ENCODE measurements at regions of chr6 and their contacts with region 1.

Region 1: GRCh38 chr6:144265390-144265789 is 19.7 kb upstream of the UTRN start:
- DNase-seq: no peak
- ATAC-seq: peak in 3 of 4 donors; percentile 17 to 59 (median 47)
- H3K4me3 ChIP-seq: peak overlapping the region in 1 of 12 donors; percentile 13
- H3K27ac ChIP-seq: peak overlapping the region; percentile 45 to 83 (median 68)
- H3K4me1 ChIP-seq: peaks cover 9 to 32% (median 26%) of the 10 kb centered on the region in 12 donors
- H3K27me3 ChIP-seq: no peaks in the 10 kb centered on the region
- CTCF ChIP-seq: no peak
- POLR2A ChIP-seq: no peak

Region 2: GRCh38 chr6:144149891-144150709 is 115.3 kb before region 1 on chr6 and contains the start of gene STX11:
- intact Hi-C with region 1: loop called in 1 of 10 experiments (anchors 1 kb)
- DNase-seq: peak; percentile 82 to 90 (median 85)
- ATAC-seq: peak; percentile 80 to 97 (median 94)
- H3K4me3 ChIP-seq: peak within 1 kb of the TSS; percentile 64 to 95 (median 78)
- H3K27ac ChIP-seq: peak within 1 kb of the TSS; percentile 10 to 97 (median 77)
- H3K4me1 ChIP-seq: peaks cover 0 to 51% (median 10%) of the 10 kb centered on the region in 12 donors
- H3K27me3 ChIP-seq: no peaks in the 10 kb centered on the region
- CTCF ChIP-seq: peak in 2 of 12 donors; percentile 21 to 46
- POLR2A ChIP-seq: peak in 1 of 2 donors; percentile 84
- total RNA-seq, gene STX11: 5.4 to 21.0 (median 9.0) TPM

Region 3: DNA sequence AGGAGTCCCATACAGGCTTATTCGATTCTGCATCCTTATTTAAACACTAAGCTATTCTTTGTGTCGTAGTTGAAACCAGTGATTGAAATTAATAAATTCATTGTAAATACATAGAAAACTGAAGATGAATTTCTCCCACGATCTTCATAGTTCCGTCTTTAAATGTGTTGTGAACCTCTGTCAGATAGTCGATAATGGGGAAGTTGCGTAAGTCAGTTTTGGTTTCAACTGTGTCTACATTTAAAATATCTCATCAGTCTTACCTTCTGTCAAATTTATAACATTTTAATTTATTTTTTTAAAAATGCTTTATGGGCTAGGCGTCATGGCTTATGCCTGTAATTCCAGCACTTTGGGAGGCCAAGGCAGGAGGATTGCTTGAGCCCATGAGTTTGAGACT is 102.4 kb before region 1 on chr6:
- intact Hi-C with region 1: no loop called
- DNase-seq: no peak
- ATAC-seq: no peak
- H3K4me3 ChIP-seq: peak overlapping the region in 1 of 12 donors; percentile 7
- H3K27ac ChIP-seq: peak overlapping the region in 1 of 12 donors; percentile 61
- H3K4me1 ChIP-seq: peaks cover 1 to 73% (median 14%) of the 10 kb centered on the region in 12 donors
- H3K27me3 ChIP-seq: no peaks in the 10 kb centered on the region
- CTCF ChIP-seq: no peak
- POLR2A ChIP-seq: no peak

Region 4: DNA sequence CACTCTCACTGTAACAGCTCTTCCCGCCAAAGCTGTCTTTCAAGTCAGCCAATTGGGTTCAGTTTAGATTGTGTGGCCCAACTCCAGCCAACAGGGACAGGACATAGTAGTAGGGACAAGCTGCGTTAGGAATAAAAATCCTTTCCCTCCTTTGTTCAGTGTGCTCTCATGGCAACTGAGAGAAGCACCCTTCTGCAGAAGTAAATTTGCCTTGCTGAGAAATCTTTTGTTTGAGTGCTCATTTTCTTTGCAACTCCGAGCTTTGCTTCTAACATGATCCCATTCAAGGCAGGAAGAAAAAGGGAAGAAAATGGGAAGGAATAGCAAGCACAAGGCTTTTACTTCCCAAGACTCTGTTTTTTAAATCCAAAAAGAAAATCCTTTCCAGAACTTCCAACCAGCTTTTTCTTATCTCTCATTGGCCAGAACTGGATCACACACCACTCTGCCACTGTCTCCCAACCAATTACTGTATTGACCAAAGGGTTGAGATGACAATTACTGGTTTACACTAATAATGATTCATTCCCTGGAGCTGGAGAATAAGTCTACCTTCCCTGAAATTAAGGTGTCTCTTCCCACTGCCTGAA is 62.4 kb before region 1 on chr6:
- intact Hi-C with region 1: no loop called
- DNase-seq: no peak
- ATAC-seq: no peak
- H3K4me3 ChIP-seq: no peak overlapping the region
- H3K27ac ChIP-seq: no peak overlapping the region
- H3K4me1 ChIP-seq: no peaks in the 10 kb centered on the region
- H3K27me3 ChIP-seq: no peaks in the 10 kb centered on the region
- CTCF ChIP-seq: no peak
- POLR2A ChIP-seq: no peak

Measured in heart left ventricle (tissue), 16 donors.